ENCODE measurements at regions of chr10 and their contacts with region 1.

Region 1: GRCh38 chr10:70404036-70404786 is at the start of gene EIF4EBP2:
- DNase-seq: peak; percentile 99
- ATAC-seq: peak; percentile 94
- total RNA-seq, gene EIF4EBP2: 91.6 TPM

Region 2: GRCh38 chr10:69885379-69886013 is 518.7 kb before region 1 on chr10:
- intact Hi-C with region 1: no loop called
- DNase-seq: no peak
- ATAC-seq: no peak

Region 3: GRCh38 chr10:70267161-70267933 is 136.9 kb before region 1 on chr10:
- intact Hi-C with region 1: no loop called
- DNase-seq: no peak
- ATAC-seq: no peak

Region 4: DNA sequence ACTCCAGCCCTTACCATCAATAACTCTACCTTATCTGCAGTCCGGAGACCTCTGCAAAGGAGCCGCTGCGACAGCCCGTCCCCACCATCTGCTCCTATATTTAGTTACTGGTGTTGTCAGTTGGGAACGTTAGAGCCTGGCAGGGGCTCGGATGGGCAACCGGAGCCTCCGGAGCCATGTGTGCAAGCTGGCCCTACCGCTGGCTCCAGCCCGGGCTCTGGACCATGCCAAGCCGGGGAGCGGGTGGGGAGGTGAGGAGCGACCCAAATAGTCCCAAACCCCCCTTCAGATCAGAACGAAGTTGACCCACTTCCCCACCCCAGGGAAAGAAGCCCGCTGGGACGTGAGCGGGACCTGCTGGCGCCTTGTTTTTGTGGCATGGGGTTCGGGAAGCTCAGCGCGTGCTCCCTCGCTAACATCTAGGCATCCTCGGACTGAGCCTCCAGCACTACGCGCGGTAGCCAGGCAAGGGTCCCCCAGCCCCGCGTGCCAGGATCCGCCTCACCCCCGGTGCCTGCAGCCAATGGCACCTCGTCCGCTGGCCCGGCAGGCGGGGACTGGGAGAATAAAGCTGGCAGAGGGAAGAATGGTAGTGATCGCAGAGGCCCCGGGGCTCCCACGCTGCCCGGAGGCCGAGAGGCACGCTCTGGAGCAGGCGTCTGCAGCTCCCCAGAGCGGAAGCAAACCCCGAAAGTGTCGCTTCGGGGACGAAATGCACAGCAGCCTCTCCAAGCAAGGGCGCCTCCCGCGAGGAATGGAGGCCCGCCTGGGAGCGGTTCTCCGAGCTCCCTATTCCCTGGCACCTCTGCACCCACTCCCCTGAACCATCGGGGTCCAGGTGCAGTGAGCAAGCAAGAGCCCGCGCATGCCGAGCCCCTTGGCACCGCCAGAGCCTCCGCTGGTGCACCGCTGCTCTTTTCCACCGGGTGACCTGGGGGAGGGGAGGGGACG is 22.5 kb before region 1 on chr10:
- intact Hi-C with region 1: loop called (anchors 1 kb)
- DNase-seq: peak; percentile 75
- ATAC-seq: peak; percentile 64

Region 5: DNA sequence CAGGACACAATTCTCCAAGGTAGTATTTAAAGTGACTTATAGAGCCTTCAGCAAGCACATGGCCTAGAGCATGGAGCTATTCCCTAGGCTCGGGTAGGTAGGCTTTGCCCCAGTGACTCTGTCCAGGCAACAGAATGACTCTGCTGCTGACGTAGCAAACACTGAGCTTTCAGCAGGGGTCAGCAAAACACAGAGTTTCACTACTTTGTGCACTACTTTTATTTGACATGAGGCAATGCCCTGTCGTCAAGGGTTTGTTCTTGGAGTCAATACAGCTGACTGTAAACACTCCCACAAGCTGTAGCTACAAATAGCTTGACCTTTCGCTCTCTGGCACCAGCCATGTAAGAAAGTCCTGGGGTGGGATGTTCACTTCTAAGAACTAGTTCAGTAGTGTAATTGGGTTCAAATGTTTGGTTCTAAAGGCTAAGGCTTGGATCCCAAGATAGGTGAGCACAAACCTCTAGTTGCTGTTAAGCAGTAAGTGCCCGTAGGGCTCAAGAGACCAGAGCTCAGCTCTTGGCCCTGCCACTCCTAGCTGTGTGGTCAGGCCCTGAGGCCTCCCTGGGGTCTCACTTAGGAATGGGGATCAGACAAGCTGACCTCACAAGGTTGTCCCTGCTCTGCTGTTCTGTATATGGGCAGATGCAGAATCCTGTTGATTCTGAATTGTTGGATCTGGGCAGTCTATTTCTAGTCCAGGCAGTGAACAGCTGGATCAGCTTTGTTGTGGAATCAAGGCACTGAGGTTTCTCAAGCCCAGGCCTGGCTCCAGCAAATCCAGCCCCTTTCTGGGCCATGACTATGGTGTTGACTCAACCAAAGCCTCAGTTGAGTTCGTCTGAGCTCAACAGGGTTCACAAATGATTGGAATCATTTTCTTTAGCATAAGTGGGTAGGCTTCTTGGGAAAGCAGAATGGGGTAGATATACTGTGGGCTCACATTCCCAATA is 26.6 kb after region 1 on chr10:
- intact Hi-C with region 1: loop called (anchors 2 kb)
- DNase-seq: no peak
- ATAC-seq: peak; percentile 86

Region 6: GRCh38 chr10:71782917-71783490 is 1378.8 kb after region 1 on chr10:
- intact Hi-C with region 1: no loop called
- DNase-seq: no peak
- ATAC-seq: no peak

Measured in Right ventricle myocardium inferior (tissue), 1 donor.